ENCODE measurements at regions of chr7 and their contacts with region 1.

Region 1: DNA sequence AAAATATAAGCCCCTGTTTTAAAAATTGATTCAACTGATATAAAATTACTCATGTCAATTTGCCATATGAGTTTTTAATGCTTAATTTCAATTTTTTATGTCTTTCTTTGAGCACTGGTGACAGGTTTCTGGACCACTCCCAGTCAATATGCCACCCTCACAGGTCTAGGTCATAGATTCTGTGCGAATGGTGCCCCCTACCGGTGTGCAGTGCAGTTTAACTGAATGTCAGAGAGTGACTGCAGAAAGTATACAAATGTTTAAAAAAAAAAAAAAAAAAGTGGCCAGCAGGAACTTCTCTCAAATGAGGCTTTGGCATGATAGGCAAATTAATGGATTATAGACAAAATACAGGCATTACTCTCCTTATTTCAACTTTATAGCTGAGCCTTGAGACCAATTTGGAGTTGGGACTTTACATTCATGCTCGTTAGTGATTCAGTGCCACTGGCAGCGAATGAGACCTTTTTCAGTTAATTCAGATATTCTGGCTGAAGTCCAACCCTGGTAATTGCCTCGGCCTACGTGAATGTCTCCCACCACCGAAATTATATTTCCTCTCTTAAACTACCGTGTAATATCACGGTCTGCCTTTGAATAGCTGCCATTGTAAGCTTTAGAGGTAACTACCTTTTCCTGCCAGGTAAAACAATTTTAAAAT is 427.6 kb downstream of the PHTF2 start:
- DNase-seq: no peak
- H3K4me3 ChIP-seq: no peak overlapping the region
- H3K27ac ChIP-seq: no peak overlapping the region
- H3K27me3 ChIP-seq: no peaks in the 10 kb centered on the region
- CTCF ChIP-seq: peak; percentile 66

Region 2: DNA sequence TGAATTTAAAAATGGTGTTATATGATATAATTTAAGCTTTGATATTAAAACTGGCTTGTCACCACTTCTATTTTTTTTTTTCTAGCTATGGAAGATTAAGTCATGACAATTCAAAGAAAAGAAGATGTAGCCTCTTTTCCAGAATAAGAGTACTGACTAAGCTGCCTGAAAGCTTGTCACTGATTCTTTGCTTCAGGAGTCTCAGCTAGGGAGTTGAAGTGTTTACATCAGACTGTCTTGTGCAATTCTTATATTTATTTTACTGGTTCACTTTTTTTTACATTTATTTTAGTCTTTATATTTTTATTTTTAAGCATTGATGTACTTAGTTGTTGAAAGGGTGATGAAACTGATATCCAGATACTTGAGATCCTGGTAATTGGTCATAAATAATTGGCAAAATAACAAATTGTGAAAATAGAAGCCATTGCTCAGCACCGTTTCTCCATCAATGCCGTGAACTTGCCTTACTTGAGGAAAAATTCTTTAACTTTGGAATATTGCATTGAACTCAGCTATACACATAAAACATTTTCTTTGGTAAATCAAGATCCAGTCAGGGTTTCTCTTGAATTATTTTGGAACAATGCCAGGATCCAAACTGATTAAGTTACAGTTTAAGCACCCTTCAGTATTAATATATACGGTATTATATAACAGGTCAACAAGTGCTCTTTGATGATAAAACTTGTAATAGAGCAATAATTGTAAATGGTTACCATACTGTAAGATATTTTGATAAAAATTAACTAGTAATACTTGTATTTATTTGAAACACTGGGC is 271.2 kb before region 1 on chr7:
- CTCF ChIA-PET with region 1: interaction called, 12 read pairs
- POLR2A ChIA-PET with region 1: no interaction called
- DNase-seq: peak; percentile 23
- H3K4me3 ChIP-seq: no peak overlapping the region
- H3K27ac ChIP-seq: no peak overlapping the region
- H3K27me3 ChIP-seq: no peaks in the 10 kb centered on the region
- CTCF ChIP-seq: no peak